Activated T-helper 2 cell treated with anti-CD3 and anti-CD28 coated beads, Interferon-gamma antibody, Interleukin-2, Interleukin-4, amounts not matched to agents 10 μg/mL and 5 μg/mL and 100 μg/mL, durations not matched to agents 14 hours and 24 hours and 36 hours (primary cell): ENCODE measurements at regions of chr1 and their contacts with region 1.

Region 1: GRCh38 chr1:217431393-217431792 is 199.5 kb downstream of the GPATCH2 start:
- DNase-seq: no peak
- H3K4me3 Mint-ChIP-seq: no peak overlapping the region
- H3K27ac Mint-ChIP-seq: no peak overlapping the region
- H3K4me1 Mint-ChIP-seq: peaks cover 4% of the 10 kb centered on the region
- H3K27me3 Mint-ChIP-seq: no peaks in the 10 kb centered on the region

Region 2: GRCh38 chr1:216670118-216670900 is 761.1 kb before region 1 on chr1:
- intact Hi-C with region 1: no loop called
- DNase-seq: no peak
- H3K4me3 Mint-ChIP-seq: no peak overlapping the region
- H3K27ac Mint-ChIP-seq: no peak overlapping the region
- H3K4me1 Mint-ChIP-seq: no peaks in the 10 kb centered on the region
- H3K27me3 Mint-ChIP-seq: no peaks in the 10 kb centered on the region

Region 3: GRCh38 chr1:217747156-217747769 is 315.9 kb after region 1 on chr1:
- intact Hi-C with region 1: loop called (anchors 5 kb)
- DNase-seq: no peak
- H3K4me3 Mint-ChIP-seq: no peak overlapping the region
- H3K27ac Mint-ChIP-seq: no peak overlapping the region
- H3K4me1 Mint-ChIP-seq: no peaks in the 10 kb centered on the region
- H3K27me3 Mint-ChIP-seq: no peaks in the 10 kb centered on the region